Breast epithelium (tissue), 4 donors: ENCODE measurements at regions of chr9 and their contacts with region 1.

Region 1: GRCh38 chr9:16985559-16986348 is 115.3 kb upstream of the BNC2 start:
- DNase-seq: no peak
- H3K4me3 ChIP-seq: no peak overlapping the region
- H3K27ac ChIP-seq: peak overlapping the region in 1 of 2 donors; percentile 43
- H3K4me1 ChIP-seq: peaks cover 0 to 3% of the 10 kb centered on the region in 2 donors
- H3K27me3 ChIP-seq: no peaks in the 10 kb centered on the region
- CTCF ChIP-seq: no peak
- POLR2A ChIP-seq: no peak

Region 2: DNA sequence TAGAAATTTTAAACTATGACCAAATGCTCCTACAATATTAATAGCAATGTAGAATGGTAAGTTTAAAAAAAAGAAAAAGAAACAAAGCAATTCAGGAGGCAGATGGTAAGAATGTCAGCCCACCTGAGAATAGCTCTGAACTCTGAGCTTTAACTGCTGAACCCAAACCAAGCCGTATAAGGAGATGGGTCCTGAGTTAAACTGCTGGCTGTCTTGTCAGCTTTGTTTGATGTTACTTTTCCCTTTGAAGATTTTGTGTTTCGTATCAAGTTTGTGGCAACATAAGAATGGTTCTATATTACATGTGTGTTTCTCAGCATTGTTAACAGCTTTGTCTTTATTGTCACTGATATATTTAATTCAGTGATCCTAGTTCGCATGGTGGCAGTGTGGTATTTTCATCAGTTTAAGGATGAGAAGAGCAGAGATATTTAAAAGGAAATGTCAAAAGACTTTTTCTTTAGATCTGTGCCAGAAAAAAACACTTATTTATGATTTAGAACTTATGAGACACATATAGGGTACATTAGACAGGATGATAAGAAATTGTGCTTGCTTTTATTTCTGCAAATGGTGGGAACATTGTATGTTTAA is 1042.8 kb before region 1 on chr9:
- intact Hi-C with region 1: loop called (anchors 5 kb)
- DNase-seq: no peak
- H3K4me3 ChIP-seq: no peak overlapping the region
- H3K27ac ChIP-seq: no peak overlapping the region
- H3K4me1 ChIP-seq: no peaks in the 10 kb centered on the region
- H3K27me3 ChIP-seq: no peaks in the 10 kb centered on the region
- CTCF ChIP-seq: no peak
- POLR2A ChIP-seq: no peak

Region 3: GRCh38 chr9:17361378-17361777 is 375.6 kb after region 1 on chr9:
- intact Hi-C with region 1: no loop called
- DNase-seq: no peak
- H3K4me3 ChIP-seq: no peak overlapping the region
- H3K27ac ChIP-seq: no peak overlapping the region
- H3K4me1 ChIP-seq: no peaks in the 10 kb centered on the region
- H3K27me3 ChIP-seq: no peaks in the 10 kb centered on the region
- CTCF ChIP-seq: no peak
- POLR2A ChIP-seq: no peak